Activated CD4-positive, alpha-beta T cell treated with anti-CD3 and anti-CD28 coated beads, Interleukin-2, amount 10 ng/mL, durations not matched to agents 24 days and 14 days (primary cell): ENCODE measurements at regions of chr2 and their contacts with region 1.

Region 1: GRCh38 chr2:190880378-190881073 is at the start of gene GLS:
- DNase-seq: peak; percentile 98
- H3K4me3 Mint-ChIP-seq: peak within 1 kb of the TSS; percentile 94
- H3K27ac Mint-ChIP-seq: peak within 1 kb of the TSS; percentile 97
- H3K4me1 Mint-ChIP-seq: peaks cover 35% of the 10 kb centered on the region
- H3K27me3 Mint-ChIP-seq: peaks cover 2% of the 10 kb centered on the region
- total RNA-seq, gene GLS: 256 and 266 TPM in 2 replicates

Region 2: GRCh38 chr2:190648289-190649034 is 232.1 kb before region 1 on chr2:
- intact Hi-C with region 1: loop called (anchors 5 kb)
- DNase-seq: peak; percentile 96
- H3K4me3 Mint-ChIP-seq: peak overlapping the region; percentile 72
- H3K27ac Mint-ChIP-seq: peak overlapping the region; percentile 82
- H3K4me1 Mint-ChIP-seq: peaks cover 36% of the 10 kb centered on the region
- H3K27me3 Mint-ChIP-seq: no peaks in the 10 kb centered on the region

Region 3: GRCh38 chr2:190781604-190782198 is 98.8 kb before region 1 on chr2:
- intact Hi-C with region 1: loop called (anchors 2 kb)
- DNase-seq: peak; percentile 85
- H3K4me3 Mint-ChIP-seq: no peak overlapping the region
- H3K27ac Mint-ChIP-seq: no peak overlapping the region
- H3K4me1 Mint-ChIP-seq: peaks cover 38% of the 10 kb centered on the region
- H3K27me3 Mint-ChIP-seq: no peaks in the 10 kb centered on the region

Region 4: DNA sequence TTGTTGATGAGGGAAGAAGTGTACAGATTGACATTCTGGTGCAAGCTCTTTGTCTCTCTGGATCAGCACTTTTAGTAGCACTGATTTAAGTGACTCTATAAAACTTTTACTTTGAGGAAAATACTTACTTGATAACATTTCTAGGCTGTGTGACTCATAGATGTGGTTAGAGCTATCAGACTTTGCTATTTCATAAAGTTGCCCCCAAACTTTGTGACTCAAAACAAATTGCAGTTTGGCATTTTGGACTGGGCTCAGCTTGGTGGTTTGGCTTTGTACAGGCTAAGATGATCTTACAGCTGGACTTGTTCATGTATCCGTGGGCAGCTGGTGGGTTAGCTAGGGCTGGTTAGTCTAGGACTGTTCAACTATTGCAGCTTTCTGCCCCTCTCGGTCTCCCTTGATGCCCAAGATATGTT is 42.0 kb before region 1 on chr2:
- intact Hi-C with region 1: no loop called
- DNase-seq: no peak
- H3K4me3 Mint-ChIP-seq: no peak overlapping the region
- H3K27ac Mint-ChIP-seq: no peak overlapping the region
- H3K4me1 Mint-ChIP-seq: peaks cover 24% of the 10 kb centered on the region
- H3K27me3 Mint-ChIP-seq: peaks cover 3% of the 10 kb centered on the region

Region 5: GRCh38 chr2:190904640-190905261 is 24.2 kb after region 1 on chr2:
- intact Hi-C with region 1: loop called (anchors 2 kb)
- DNase-seq: no peak
- H3K4me3 Mint-ChIP-seq: no peak overlapping the region
- H3K27ac Mint-ChIP-seq: peak overlapping the region; percentile 62
- H3K4me1 Mint-ChIP-seq: peaks cover 11% of the 10 kb centered on the region
- H3K27me3 Mint-ChIP-seq: no peaks in the 10 kb centered on the region

Region 6: GRCh38 chr2:191020221-191020741 is 139.8 kb after region 1 on chr2:
- intact Hi-C with region 1: loop called (anchors 1 kb)
- DNase-seq: peak; percentile 99
- H3K4me3 Mint-ChIP-seq: no peak overlapping the region
- H3K27ac Mint-ChIP-seq: no peak overlapping the region
- H3K4me1 Mint-ChIP-seq: peaks cover 31% of the 10 kb centered on the region
- H3K27me3 Mint-ChIP-seq: peaks cover 2% of the 10 kb centered on the region

Region 7: DNA sequence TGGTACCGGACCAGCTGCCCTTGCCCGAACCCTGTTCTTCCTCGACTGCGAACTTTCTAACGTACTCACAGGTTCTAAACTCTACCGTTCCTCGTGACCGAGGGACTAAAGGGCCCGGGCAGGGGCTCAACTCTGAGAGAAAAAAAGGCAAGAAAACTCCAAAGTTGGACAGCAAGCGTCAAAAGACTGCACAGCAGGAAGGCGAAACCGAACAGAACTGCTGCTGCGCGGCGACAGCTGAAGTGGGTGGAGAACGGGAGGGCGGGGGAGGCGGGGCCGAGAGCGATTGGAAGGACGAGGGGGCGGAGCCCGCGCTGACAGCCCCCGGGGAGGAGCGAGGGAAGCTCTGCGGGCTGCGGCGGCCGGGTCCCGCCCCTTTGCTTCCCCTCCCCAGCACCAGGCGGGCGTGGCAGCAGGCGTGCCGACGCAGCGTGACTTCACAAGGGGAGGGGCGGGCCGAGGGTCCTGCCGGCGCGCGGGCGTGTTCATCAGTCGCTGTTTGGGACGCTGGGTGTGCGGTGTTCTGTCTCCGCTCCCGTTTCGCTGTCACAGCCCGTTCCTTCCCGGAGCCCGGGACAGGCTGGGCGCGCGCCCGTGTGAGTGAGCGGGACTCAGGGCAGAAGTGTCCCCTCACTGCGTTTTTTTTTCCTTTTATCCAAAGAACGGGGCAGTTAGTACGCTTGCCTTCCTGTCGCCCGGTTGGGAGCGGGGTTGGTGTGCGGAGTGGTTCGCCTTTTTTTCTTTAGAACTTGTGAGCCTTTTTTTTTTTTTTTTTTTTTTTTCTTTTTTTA is 797.3 kb after region 1 on chr2 and contains the start of gene NABP1:
- intact Hi-C with region 1: loop called (anchors 1 kb)
- DNase-seq: peak; percentile 100
- H3K4me3 Mint-ChIP-seq: peak within 1 kb of the TSS; percentile 99
- H3K27ac Mint-ChIP-seq: peak within 1 kb of the TSS; percentile 100
- H3K4me1 Mint-ChIP-seq: peaks cover 47% of the 10 kb centered on the region
- H3K27me3 Mint-ChIP-seq: no peaks in the 10 kb centered on the region
- total RNA-seq, gene NABP1: 50.7 and 53.1 TPM in 2 replicates